Activated T-helper 1 cell treated with anti-CD3 and anti-CD28 coated beads, Interleukin-12 subunit alpha, Interleukin-12 subunit beta, Interleukin-2, Interleukin-4 antibody, amounts not matched to agents 30 ng/mL and 10 ng/mL and 1 ng/mL, durations not matched to agents 14 hours and 24 hours and 36 hours (primary cell): ENCODE measurements at regions of chr10 and their contacts with region 1.

Region 1: GRCh38 chr10:70656489-70656888 is 15.8 kb upstream of the ADAMTS14 start:
- DNase-seq: peak; percentile 42
- H3K4me3 Mint-ChIP-seq: peak overlapping the region; percentile 25
- H3K27ac Mint-ChIP-seq: peak overlapping the region; percentile 51
- H3K4me1 Mint-ChIP-seq: peaks cover 26% of the 10 kb centered on the region
- H3K27me3 Mint-ChIP-seq: peaks cover 8% of the 10 kb centered on the region

Region 2: GRCh38 chr10:70549962-70550458 is 106.5 kb before region 1 on chr10:
- intact Hi-C with region 1: loop called (anchors 1 kb)
- DNase-seq: peak; percentile 58
- H3K4me3 Mint-ChIP-seq: no peak overlapping the region
- H3K27ac Mint-ChIP-seq: no peak overlapping the region
- H3K4me1 Mint-ChIP-seq: peaks cover 4% of the 10 kb centered on the region
- H3K27me3 Mint-ChIP-seq: peaks cover 2% of the 10 kb centered on the region

Region 3: GRCh38 chr10:70558871-70559810 is 97.3 kb before region 1 on chr10:
- intact Hi-C with region 1: loop called (anchors 1 kb)
- DNase-seq: peak; percentile 50
- H3K4me3 Mint-ChIP-seq: peak overlapping the region; percentile 67
- H3K27ac Mint-ChIP-seq: peak overlapping the region; percentile 65
- H3K4me1 Mint-ChIP-seq: peaks cover 27% of the 10 kb centered on the region
- H3K27me3 Mint-ChIP-seq: no peaks in the 10 kb centered on the region

Region 4: GRCh38 chr10:70587045-70587658 is 69.3 kb before region 1 on chr10:
- intact Hi-C with region 1: loop called (anchors 1 kb)
- DNase-seq: no peak
- H3K4me3 Mint-ChIP-seq: no peak overlapping the region
- H3K27ac Mint-ChIP-seq: peak overlapping the region; percentile 92
- H3K4me1 Mint-ChIP-seq: peaks cover 26% of the 10 kb centered on the region
- H3K27me3 Mint-ChIP-seq: peaks cover 11% of the 10 kb centered on the region

Region 5: GRCh38 chr10:70672165-70673042 is 15.9 kb after region 1 on chr10 and contains the start of gene ADAMTS14:
- intact Hi-C with region 1: loop called (anchors 2 kb)
- DNase-seq: no peak
- H3K4me3 Mint-ChIP-seq: peak within 1 kb of the TSS; percentile 64
- H3K27ac Mint-ChIP-seq: no peak within 1 kb of the TSS
- H3K4me1 Mint-ChIP-seq: peaks cover 7% of the 10 kb centered on the region
- H3K27me3 Mint-ChIP-seq: peaks cover 35% of the 10 kb centered on the region
- total RNA-seq, gene ADAMTS14: 0.21 and 0.37 TPM in 2 replicates

Region 6: GRCh38 chr10:70693619-70694335 is 37.3 kb after region 1 on chr10:
- intact Hi-C with region 1: no loop called
- DNase-seq: no peak
- H3K4me3 Mint-ChIP-seq: no peak overlapping the region
- H3K27ac Mint-ChIP-seq: no peak overlapping the region
- H3K4me1 Mint-ChIP-seq: no peaks in the 10 kb centered on the region
- H3K27me3 Mint-ChIP-seq: no peaks in the 10 kb centered on the region